ENCODE measurements at regions of chr16 and their contacts with region 1.

Region 1: DNA sequence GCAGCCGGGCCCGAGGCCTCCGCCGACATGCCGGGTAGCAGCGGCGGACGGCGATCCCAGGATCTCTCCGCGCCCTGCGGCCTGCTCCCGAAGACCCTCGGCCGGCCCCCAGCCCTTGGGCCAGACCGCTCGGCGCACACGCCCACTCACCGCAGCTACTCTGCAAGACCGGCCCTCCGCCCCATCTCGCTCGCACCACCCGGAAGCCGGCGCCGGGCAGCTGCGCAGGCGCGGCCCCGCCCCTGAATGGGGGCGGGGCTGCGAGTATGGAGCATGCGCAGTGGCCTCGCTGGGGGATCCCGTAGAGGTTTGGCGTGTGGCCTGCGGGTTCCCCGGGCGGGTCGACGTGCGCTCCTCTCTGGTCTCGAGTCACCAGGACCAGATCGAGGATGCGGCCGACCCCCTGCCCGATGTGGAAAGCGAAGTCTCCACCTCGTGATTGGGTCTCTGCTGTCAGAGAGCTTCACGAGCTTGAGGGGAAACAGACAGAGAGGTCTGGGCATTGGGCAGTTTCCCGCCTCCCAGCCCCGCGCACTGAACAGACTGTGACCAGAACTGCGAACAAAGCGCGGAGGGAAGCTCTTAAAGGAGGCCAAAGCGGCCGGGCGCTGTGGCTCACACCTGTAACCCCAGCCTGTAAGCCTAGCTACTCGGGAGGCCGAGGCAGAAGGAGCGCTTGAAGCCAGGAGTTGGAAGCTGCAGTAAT is at the start of gene KCTD13:
- DNase-seq: peak; percentile 85 to 88
- ATAC-seq: peak; percentile 97 to 99 (median 99)
- H3K4me3 ChIP-seq: peak within 1 kb of the TSS; percentile 83 to 100 (median 94)
- H3K27ac ChIP-seq: peak within 1 kb of the TSS; percentile 18 to 92 (median 88)
- H3K4me1 ChIP-seq: peaks cover 2 to 31% (median 23%) of the 10 kb centered on the region in 9 donors
- H3K27me3 ChIP-seq: no peaks in the 10 kb centered on the region
- CTCF ChIP-seq: no peak
- total RNA-seq, gene KCTD13: 5.4 to 8.2 (median 7.3) TPM

Region 2: GRCh38 chr16:29891525-29892457 is 34.4 kb before region 1 on chr16:
- intact Hi-C with region 1: no loop called
- DNase-seq: no peak
- ATAC-seq: no peak
- H3K4me3 ChIP-seq: no peak overlapping the region
- H3K27ac ChIP-seq: no peak overlapping the region
- H3K4me1 ChIP-seq: no peaks in the 10 kb centered on the region
- H3K27me3 ChIP-seq: peaks cover 0 to 14% (median 8%) of the 10 kb centered on the region in 7 donors
- CTCF ChIP-seq: no peak

Region 3: DNA sequence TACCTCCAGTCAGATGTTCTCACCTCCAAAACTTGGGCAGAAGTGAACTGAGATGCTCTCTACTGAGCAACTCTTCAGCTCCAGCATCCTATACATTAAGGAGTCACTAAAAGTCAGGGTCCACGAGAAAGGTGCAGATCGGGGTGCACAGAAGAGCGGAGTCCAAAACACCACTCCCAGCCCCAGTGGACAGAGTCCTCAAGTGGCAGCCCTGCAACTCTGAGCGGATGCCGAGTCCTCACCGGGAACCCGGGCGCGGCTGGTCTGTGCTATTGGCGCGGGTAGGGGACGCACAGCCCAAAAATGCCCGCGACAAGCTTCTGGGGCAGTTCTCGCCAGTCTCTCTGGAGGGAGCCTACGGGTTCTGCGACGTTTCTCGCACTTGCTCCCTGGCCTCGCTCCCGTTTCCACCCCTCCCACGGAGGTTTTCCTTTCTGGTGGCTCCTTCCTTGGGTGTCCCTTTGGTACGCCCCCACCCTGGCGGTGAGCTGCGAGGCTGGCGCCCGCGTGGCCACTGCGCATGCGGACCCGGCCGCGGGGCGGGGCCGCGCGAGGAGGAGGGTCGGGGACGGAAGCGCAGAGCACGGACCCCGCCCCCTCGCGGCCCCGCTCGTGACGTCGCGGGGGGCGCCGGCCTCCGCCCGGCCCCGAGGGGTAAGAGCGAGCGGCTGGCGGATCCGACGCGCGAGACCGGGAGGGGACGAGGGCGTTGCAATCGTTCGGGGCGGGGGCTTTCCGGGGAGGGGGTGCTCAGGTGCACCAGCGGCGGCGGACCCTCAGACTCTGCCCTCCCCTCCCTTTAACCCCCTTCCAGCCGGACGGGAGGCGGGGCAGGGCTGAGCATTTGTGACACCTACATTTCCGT is 35.6 kb after region 1 on chr16 and contains the start of gene TMEM219:
- intact Hi-C with region 1: loop called in 2 of 10 experiments (anchors 5 kb)
- DNase-seq: peak; percentile 92 to 94
- ATAC-seq: peak; percentile 95 to 99 (median 97)
- H3K4me3 ChIP-seq: peak within 1 kb of the TSS; percentile 46 to 94 (median 81)
- H3K27ac ChIP-seq: peak within 1 kb of the TSS; percentile 93 to 98 (median 96)
- H3K4me1 ChIP-seq: peaks cover 0 to 35% (median 20%) of the 10 kb centered on the region in 9 donors
- H3K27me3 ChIP-seq: no peaks in the 10 kb centered on the region
- CTCF ChIP-seq: peak; percentile 29 to 69 (median 46)
- total RNA-seq, gene TMEM219: 53.0 to 105 (median 67.1) TPM

Region 4: GRCh38 chr16:29973384-29974246 is 47.5 kb after region 1 on chr16 and contains the start of gene TAOK2:
- intact Hi-C with region 1: loop called in 2 of 10 experiments (anchors 5 to 10 kb)
- DNase-seq: peak; percentile 99
- ATAC-seq: peak; percentile 96 to 98 (median 98)
- H3K4me3 ChIP-seq: peak within 1 kb of the TSS; percentile 69 to 99 (median 81)
- H3K27ac ChIP-seq: peak within 1 kb of the TSS; percentile 85 to 100 (median 94)
- H3K4me1 ChIP-seq: peaks cover 3 to 49% (median 38%) of the 10 kb centered on the region in 9 donors
- H3K27me3 ChIP-seq: no peaks in the 10 kb centered on the region
- CTCF ChIP-seq: peak in 1 of 9 donors; percentile 5
- total RNA-seq, gene TAOK2: 27.0 to 40.6 (median 32.7) TPM

Region 5: GRCh38 chr16:29995911-29996772 is 70.0 kb after region 1 on chr16 and contains the start of gene INO80E:
- intact Hi-C with region 1: loop called in 4 of 10 experiments (anchors 10 kb)
- DNase-seq: peak; percentile 99 to 100
- ATAC-seq: peak; percentile 98 to 99 (median 99)
- H3K4me3 ChIP-seq: peak within 1 kb of the TSS; percentile 55 to 97 (median 82)
- H3K27ac ChIP-seq: peak within 1 kb of the TSS; percentile 87 to 99 (median 96)
- H3K4me1 ChIP-seq: peaks cover 7 to 40% (median 28%) of the 10 kb centered on the region in 9 donors
- H3K27me3 ChIP-seq: no peaks in the 10 kb centered on the region
- CTCF ChIP-seq: peak in 1 of 9 donors; percentile 18
- total RNA-seq, gene INO80E: 23.2 to 34.8 (median 30.6) TPM

Region 6: GRCh38 chr16:30005341-30006094 is 79.4 kb after region 1 on chr16:
- intact Hi-C with region 1: loop called in 5 of 10 experiments (anchors 5 to 10 kb)
- DNase-seq: no peak
- ATAC-seq: peak in 7 of 8 donors; percentile 42 to 73 (median 66)
- H3K4me3 ChIP-seq: no peak overlapping the region
- H3K27ac ChIP-seq: no peak overlapping the region
- H3K4me1 ChIP-seq: peaks cover 0 to 13% (median 4%) of the 10 kb centered on the region in 9 donors
- H3K27me3 ChIP-seq: peaks cover 13 to 28% (median 25%) of the 10 kb centered on the region in 7 donors
- CTCF ChIP-seq: peak; percentile 77 to 88 (median 84)

Region 7: GRCh38 chr16:30010844-30011713 is 84.9 kb after region 1 on chr16 and contains the start of gene DOC2A:
- intact Hi-C with region 1: loop called in 5 of 10 experiments (anchors 5 to 10 kb)
- DNase-seq: no peak
- ATAC-seq: no peak
- H3K4me3 ChIP-seq: peak within 1 kb of the TSS in 9 of 10 donors; percentile 23 to 54 (median 43)
- H3K27ac ChIP-seq: no peak within 1 kb of the TSS
- H3K4me1 ChIP-seq: peaks cover 3 to 24% (median 18%) of the 10 kb centered on the region in 9 donors
- H3K27me3 ChIP-seq: peaks cover 19 to 52% (median 46%) of the 10 kb centered on the region in 7 donors
- CTCF ChIP-seq: no peak
- total RNA-seq, gene DOC2A: 0.27 to 0.95 (median 0.48) TPM in 4 of 10 donors, not detected in the others